Mammary epithelial cell (primary cell): ENCODE measurements at regions of chr16 and their contacts with region 1.

Region 1: DNA sequence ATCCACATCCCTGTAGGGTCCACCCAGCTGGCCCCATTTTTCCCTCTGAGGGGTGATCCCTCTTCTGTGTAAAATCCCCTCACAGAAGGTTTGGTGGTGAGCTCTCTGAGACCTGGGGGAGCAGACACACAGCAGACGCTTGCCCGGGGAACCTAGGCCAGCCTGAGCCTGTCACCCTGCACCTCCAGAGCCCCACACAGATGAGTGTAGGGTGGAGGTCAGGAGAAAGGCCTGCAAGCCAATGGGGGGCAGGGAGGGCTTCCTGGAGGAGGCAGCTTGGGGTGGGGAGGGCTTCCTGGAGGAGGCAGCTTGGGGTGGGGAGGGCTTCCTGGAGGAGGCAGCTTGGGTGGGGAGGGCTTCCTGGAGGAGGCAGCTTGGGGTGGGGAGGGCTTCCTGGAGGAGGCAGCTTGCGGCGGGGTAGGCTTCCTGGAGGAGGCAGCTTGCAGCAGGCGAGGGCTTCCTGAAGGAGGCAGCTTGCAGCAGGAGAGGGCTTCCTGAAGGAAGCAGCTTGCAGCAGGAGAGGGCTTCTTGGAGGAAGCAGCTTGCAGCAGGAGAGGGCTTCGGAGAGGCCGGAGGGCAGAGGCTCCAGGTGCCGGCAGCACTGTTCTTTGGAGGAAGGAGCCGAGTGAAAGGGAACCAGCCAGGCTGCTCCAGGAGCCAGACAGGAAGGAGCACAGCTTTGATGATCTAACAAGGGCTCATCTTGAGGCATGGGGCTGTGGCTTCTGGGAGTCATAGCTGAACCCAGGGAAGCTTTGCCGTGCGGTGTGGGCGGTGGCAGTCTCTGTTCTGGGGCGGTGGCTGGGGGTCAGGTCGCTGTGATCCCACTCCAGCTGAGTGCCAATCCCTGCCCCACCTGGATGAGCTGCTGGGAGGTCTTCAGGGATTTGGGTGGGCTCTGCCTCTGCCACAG is 83.7 kb upstream of the ZNF469 start:
- DNase-seq: peak; percentile 70
- H3K4me3 ChIP-seq: no peak overlapping the region
- H3K27ac ChIP-seq: peak overlapping the region; percentile 66
- H3K4me1 ChIP-seq: peaks cover 50% of the 10 kb centered on the region
- H3K27me3 ChIP-seq: no peaks in the 10 kb centered on the region
- CTCF ChIP-seq: no peak

Region 2: DNA sequence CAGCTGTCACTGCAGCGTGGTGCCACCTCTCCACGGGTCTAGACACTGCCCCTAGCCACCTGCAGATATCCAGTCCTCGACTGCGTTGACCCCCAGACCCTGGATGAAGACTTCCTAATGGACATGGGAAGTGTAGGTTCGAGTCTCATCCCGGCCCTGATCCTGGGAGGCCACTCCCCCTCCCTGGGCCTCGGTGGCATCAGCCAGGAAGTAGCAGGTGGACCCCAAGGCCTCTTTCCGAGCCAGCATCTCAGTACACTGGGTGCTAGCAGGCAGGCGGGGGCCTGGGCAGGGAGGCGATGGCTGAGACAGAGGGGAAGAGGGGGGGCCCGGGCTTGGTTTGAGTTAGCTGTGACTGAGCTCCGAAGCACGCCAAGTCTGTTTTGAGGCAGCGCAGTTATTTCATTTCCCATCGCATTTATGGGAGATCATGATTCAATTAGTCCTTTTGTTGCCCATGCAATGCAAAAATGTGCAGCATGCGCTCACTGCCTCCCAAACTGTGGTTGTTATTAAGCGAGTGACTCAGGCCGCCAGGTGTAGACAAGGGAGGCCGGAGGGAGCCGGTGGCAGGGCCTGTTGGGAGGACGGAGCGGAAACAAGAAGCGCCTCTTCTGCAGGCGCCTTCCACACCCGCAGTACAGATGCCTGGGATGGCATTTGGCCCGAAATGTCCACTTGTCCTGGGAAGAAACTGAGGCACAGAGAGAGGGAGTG is 58.4 kb after region 1 on chr16:
- CTCF ChIA-PET with region 1: no interaction called
- dilution Hi-C with region 1: loop called (anchors 5 kb)
- in situ Hi-C with region 1: no loop called
- intact Hi-C with region 1: no loop called
- DNase-seq: no peak
- H3K4me3 ChIP-seq: no peak overlapping the region
- H3K27ac ChIP-seq: no peak overlapping the region
- H3K4me1 ChIP-seq: no peaks in the 10 kb centered on the region
- H3K27me3 ChIP-seq: no peaks in the 10 kb centered on the region
- CTCF ChIP-seq: no peak

Region 3: DNA sequence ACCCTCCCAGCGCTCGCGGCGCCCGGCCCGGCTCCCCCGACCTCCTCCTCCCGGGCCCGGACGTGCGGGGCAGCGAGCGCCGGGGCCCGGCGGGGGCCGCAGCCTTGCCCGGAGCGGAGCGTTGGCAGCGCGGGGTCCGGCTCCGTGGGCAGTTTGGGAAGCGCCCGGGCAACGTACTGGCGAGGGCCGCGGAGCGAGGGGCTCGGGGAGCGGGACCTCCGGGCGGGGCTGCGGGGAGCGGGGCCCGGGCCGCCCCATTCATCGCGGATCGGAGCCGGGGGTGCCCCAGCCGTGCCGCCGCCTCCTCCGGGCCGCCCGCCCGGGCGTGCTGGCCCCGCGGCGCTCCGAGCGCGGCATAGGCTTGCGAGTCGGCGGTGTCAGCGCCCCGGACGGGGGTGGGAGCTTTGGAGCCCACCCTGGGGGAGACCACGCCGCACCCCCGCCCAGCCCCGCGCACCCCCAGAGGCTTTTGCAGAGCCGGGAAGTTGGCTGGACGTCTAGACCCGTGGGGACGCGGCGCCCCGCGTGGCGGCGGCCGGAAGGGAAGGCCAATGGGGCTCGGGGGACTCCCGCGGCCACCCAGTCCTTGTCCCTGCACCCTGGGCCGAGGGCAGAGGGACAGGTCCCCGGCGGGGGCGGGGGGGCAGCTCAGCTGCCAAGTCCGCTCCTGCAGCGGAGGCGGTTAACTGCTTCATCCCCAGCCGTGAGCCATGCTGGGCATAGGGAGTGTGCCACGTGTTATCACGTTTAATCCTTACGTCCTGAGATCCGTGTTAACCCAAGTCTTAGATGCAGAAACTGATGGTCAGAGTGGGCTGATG is 84.5 kb after region 1 on chr16:
- CTCF ChIA-PET with region 1: no interaction called
- dilution Hi-C with region 1: no loop called
- in situ Hi-C with region 1: no loop called
- intact Hi-C with region 1: loop called (anchors 10 kb)
- DNase-seq: no peak
- H3K4me3 ChIP-seq: peak overlapping the region in 2 of 3 experiments; percentile 26 to 33
- H3K27ac ChIP-seq: no peak overlapping the region
- H3K4me1 ChIP-seq: peaks cover 7% of the 10 kb centered on the region
- H3K27me3 ChIP-seq: peaks cover 4% of the 10 kb centered on the region
- CTCF ChIP-seq: peak in 1 of 2 donors; percentile 57

Region 4: DNA sequence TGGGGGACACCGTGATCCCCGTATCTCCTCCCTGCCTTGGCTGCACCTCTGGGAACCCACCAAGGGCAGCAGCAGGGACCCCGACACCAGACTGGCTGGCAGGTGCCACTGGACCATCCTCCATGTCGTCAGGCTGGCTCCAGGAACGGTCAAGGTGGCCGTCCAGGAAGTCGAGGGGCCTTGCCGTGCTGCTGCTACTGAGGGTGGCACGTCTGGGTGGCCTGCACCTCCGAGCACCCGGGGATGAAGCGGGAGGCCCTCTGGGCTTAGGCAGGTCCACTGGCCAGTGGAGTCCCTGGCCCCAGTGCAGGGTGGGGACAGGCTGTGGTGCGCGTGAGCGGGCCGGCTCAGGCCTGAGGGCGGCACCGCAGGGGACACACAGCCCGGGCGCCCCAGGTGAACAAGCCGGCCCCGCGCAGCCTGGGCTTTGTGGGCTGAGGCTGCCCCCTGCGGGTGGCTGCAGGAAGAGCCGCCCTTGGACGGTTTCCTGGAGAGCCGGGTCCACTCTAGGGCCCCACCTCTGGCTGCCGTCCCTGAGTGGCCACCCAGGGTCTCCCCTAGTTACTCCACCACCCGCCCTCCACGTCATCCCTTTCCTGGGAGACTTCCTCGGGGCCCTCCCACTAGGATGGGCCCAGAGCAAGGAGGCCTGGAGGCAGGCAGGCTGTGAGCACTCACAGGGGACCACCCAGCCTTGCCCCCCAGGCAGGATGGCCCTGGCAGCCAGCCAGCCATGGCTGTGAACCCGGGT is 228.3 kb after region 1 on chr16:
- CTCF ChIA-PET with region 1: no interaction called
- dilution Hi-C with region 1: loop called (anchors 5 kb)
- in situ Hi-C with region 1: no loop called
- intact Hi-C with region 1: no loop called
- DNase-seq: peak; percentile 23
- H3K4me3 ChIP-seq: no peak overlapping the region
- H3K27ac ChIP-seq: no peak overlapping the region
- H3K4me1 ChIP-seq: no peaks in the 10 kb centered on the region
- H3K27me3 ChIP-seq: no peaks in the 10 kb centered on the region
- CTCF ChIP-seq: peak; percentile 56 to 79